B cell (primary cell): ENCODE measurements at regions of chr20 and their contacts with region 1.

Region 1: GRCh38 chr20:2663887-2664719 is at the start of gene IDH3B:
- DNase-seq: peak; percentile 92
- ATAC-seq: peak; percentile 95
- H3K4me3 ChIP-seq: peak within 1 kb of the TSS; percentile 71 to 96 (median 80)
- H3K4me3 Mint-ChIP-seq: peak within 1 kb of the TSS; percentile 92
- H3K27ac ChIP-seq: peak within 1 kb of the TSS; percentile 88 to 98
- H3K27ac Mint-ChIP-seq: peak within 1 kb of the TSS; percentile 98
- H3K4me1 ChIP-seq: peaks cover 13 to 14% of the 10 kb centered on the region in 2 donors
- H3K4me1 Mint-ChIP-seq: peaks cover 20% of the 10 kb centered on the region
- H3K27me3 ChIP-seq: peaks cover 0 to 6% (median 0%) of the 10 kb centered on the region in 4 experiments
- H3K27me3 Mint-ChIP-seq: peaks cover 12% of the 10 kb centered on the region
- CTCF ChIP-seq: no peak
- total RNA-seq, gene IDH3B: 126 and 131 TPM in 2 replicates

Region 2: GRCh38 chr20:2599288-2600006 is 64.7 kb before region 1 on chr20:
- CTCF ChIA-PET with region 1: no interaction called
- POLR2A ChIA-PET with region 1: no interaction called
- intact Hi-C with region 1: no loop called
- DNase-seq: no peak
- ATAC-seq: no peak
- H3K4me3 ChIP-seq: no peak overlapping the region
- H3K4me3 Mint-ChIP-seq: no peak overlapping the region
- H3K27ac ChIP-seq: no peak overlapping the region
- H3K27ac Mint-ChIP-seq: no peak overlapping the region
- H3K4me1 ChIP-seq: no peaks in the 10 kb centered on the region
- H3K4me1 Mint-ChIP-seq: no peaks in the 10 kb centered on the region
- H3K27me3 ChIP-seq: peaks cover 0 to 7% (median 0%) of the 10 kb centered on the region in 4 experiments
- H3K27me3 Mint-ChIP-seq: peaks cover 15% of the 10 kb centered on the region
- CTCF ChIP-seq: no peak

Region 3: DNA sequence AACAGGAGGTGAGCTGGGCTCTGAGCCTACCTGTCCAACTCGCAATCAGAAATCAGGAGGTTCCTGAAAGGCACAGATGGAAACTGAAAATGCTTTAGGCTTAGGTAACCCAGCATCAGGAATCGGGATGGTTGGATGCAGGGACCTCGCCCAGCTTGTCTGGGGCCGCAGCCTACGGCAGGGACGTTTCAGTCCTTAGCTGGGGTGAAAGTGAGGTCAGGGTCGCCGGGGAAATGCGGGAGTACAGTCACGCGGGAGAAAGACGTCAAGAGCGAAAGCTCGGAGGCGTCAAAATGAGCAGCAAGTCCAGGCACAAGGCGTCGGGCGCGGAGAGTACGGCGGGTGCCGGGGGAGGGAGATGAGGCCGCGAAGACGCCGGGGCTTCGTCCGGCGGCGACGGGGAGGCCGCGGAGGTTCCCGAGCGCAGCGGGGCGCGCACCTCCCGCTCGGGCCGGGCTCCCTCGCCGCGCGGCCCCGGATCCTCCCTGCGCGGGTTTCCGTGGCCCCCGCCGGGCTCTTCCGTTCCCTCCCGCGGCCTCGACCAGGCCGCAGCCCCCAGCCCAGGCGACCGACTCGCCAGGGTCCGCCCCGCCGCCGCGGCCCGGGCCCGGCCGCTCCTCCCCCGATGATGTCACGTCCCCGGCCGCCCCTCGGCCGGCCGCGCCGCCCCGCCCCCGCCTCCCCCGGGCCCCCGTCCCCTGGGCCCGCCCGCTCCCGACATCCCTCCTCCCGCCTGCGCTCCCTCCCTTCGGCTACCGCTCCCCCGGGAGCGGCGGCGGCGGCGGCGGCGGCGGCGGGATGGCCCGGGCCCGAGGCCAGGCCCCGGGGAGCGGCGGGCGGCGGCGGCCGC is 28.2 kb after region 1 on chr20 and contains the start of gene EBF4:
- CTCF ChIA-PET with region 1: no interaction called
- POLR2A ChIA-PET with region 1: interaction called, 3 read pairs
- intact Hi-C with region 1: loop called (anchors 1 kb)
- DNase-seq: peak; percentile 56
- ATAC-seq: peak; percentile 56
- H3K4me3 ChIP-seq: peak within 1 kb of the TSS in 4 of 5 experiments; percentile 34 to 49 (median 40)
- H3K4me3 Mint-ChIP-seq: peak within 1 kb of the TSS; percentile 91
- H3K27ac ChIP-seq: no peak within 1 kb of the TSS
- H3K27ac Mint-ChIP-seq: peak within 1 kb of the TSS; percentile 74
- H3K4me1 ChIP-seq: peaks cover 14 to 19% of the 10 kb centered on the region in 2 donors
- H3K4me1 Mint-ChIP-seq: peaks cover 22% of the 10 kb centered on the region
- H3K27me3 ChIP-seq: peaks cover 0 to 65% (median 32%) of the 10 kb centered on the region in 4 experiments
- H3K27me3 Mint-ChIP-seq: peaks cover 69% of the 10 kb centered on the region
- CTCF ChIP-seq: no peak
- total RNA-seq, gene EBF4: 4.7 and 5.0 TPM in 2 replicates